ENCODE measurements at regions of chr10 and their contacts with region 1.

Region 1: DNA sequence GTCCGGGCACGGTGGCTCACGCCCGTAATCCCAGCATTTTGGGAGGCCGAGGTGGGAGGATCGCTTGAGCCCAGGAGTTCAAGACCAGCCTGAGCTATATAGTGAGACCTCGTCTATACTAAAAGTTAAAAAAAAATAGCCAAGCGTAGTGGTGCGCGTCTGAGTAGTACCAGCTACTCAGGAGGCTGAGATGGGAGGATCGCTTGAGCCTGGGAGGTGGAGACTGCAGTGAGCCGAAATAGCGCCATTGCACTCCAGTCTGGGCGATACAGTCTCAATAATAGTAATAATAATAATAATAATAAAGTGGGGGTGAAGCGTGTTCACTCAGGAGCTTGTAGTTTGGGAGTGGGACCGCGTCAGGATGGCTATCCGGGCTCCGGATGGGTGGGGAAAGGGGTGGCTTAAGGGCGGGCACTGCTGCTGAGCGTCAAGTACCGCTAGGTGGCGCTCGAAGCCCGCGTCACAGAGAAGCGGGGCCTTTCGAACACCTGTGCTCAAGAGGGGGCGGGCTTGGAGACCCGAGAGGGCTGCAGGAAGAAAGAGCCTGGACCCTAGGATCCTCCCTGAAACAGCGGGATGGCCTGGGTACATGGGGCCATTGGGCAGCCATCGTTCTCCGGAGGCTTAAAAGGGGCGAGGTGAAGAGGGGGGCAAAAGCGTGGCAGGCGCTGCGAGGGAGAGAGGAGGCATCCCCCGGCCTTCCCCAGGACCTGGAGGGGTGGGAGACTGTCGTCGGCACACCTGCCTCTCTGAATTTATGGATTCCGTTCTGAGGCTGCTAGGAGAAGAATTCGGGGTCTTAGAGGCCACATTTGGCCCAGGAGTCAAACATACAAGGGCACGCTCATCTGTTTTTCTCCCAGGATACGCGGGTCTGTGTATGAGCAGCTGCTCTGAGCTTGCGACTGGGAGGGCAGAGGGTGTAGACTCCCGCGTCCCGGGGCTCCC is 14.5 kb downstream of the LBX1 start:
- DNase-seq: peak; percentile 49
- H3K4me3 Mint-ChIP-seq: no peak overlapping the region
- H3K27ac Mint-ChIP-seq: peak overlapping the region; percentile 76
- H3K4me1 Mint-ChIP-seq: peaks cover 18% of the 10 kb centered on the region
- H3K27me3 Mint-ChIP-seq: peaks cover 63% of the 10 kb centered on the region

Region 2: GRCh38 chr10:100653957-100654781 is 560.6 kb before region 1 on chr10:
- intact Hi-C with region 1: loop called (anchors 5 kb)
- DNase-seq: no peak
- H3K4me3 Mint-ChIP-seq: peak overlapping the region; percentile 57
- H3K27ac Mint-ChIP-seq: no peak overlapping the region
- H3K4me1 Mint-ChIP-seq: peaks cover 20% of the 10 kb centered on the region
- H3K27me3 Mint-ChIP-seq: peaks cover 63% of the 10 kb centered on the region

Region 3: GRCh38 chr10:101161494-101162299 is 53.0 kb before region 1 on chr10:
- intact Hi-C with region 1: loop called (anchors 1 kb)
- DNase-seq: peak; percentile 44
- H3K4me3 Mint-ChIP-seq: no peak overlapping the region
- H3K27ac Mint-ChIP-seq: peak overlapping the region; percentile 30
- H3K4me1 Mint-ChIP-seq: peaks cover 11% of the 10 kb centered on the region
- H3K27me3 Mint-ChIP-seq: peaks cover 63% of the 10 kb centered on the region

Region 4: DNA sequence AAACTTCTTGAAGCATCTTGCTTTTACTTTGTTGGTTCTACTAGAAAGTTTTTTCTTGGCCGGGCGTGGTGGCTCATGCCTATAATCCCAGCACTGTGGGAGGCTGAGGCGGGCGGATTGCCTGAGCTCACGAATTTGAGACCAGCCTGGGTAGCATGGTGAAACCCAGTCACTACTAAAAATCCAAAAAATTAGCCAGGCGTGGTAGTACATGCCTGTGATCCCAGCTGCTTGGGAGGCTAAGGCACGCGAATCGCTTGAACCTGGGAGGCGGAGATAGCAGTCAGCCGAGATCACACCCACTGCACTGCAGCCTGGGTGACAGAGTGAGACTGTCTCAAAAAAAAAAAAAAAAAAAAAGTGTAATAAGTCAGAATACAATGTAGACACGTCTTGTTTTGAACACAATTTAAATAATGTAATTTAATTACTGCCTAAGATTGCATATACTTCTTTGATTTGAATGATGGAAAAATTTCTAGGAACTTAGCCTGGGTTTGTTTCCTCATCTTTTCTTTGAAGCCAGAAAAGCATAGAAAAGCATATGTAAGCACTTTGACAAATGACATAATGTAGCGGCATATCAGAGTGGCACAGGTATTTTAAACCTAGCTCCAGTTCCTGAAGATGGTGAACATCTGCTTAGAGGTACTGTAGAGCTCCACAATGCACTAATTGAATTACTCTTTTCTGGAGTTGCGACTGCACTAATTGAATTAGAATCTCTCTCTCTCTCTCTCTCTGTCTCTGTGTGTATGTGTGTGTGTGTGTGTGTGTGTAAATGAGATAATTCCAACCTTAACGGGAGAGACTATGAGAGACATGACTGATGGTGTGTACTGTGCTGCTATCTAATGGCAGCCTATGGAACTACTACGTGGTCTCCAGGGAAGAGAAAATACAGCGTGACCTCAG is 227.1 kb after region 1 on chr10:
- intact Hi-C with region 1: loop called (anchors 2 kb)
- DNase-seq: no peak
- H3K4me3 Mint-ChIP-seq: no peak overlapping the region
- H3K27ac Mint-ChIP-seq: no peak overlapping the region
- H3K4me1 Mint-ChIP-seq: no peaks in the 10 kb centered on the region
- H3K27me3 Mint-ChIP-seq: no peaks in the 10 kb centered on the region

Region 5: GRCh38 chr10:101481256-101481655 is 266.5 kb after region 1 on chr10:
- intact Hi-C with region 1: no loop called
- DNase-seq: no peak
- H3K4me3 Mint-ChIP-seq: no peak overlapping the region
- H3K27ac Mint-ChIP-seq: no peak overlapping the region
- H3K4me1 Mint-ChIP-seq: no peaks in the 10 kb centered on the region
- H3K27me3 Mint-ChIP-seq: peaks cover 2% of the 10 kb centered on the region

Region 6: GRCh38 chr10:101569838-101570766 is 355.4 kb after region 1 on chr10:
- intact Hi-C with region 1: loop called (anchors 1 kb)
- DNase-seq: peak; percentile 61
- H3K4me3 Mint-ChIP-seq: peak overlapping the region; percentile 68
- H3K27ac Mint-ChIP-seq: no peak overlapping the region
- H3K4me1 Mint-ChIP-seq: no peaks in the 10 kb centered on the region
- H3K27me3 Mint-ChIP-seq: peaks cover 41% of the 10 kb centered on the region